A549 (cell line): ENCODE measurements at regions of chr15 and their contacts with region 1.

Region 1: GRCh38 chr15:98904544-98904943 is 103.0 kb downstream of the PGPEP1L start:
- DNase-seq: peak; percentile 85 to 89
- ATAC-seq: peak; percentile 77 to 79
- H3K4me3 ChIP-seq: no peak overlapping the region
- H3K27ac ChIP-seq: peak overlapping the region; percentile 94 to 97
- H3K4me1 ChIP-seq: peaks cover 85% of the 10 kb centered on the region
- CTCF ChIP-seq: peak; percentile 91
- EP300 ChIP-seq: no peak
- POLR2A ChIP-seq: no peak
- RAD21 ChIP-seq: peak; percentile 95 to 98

Region 2: DNA sequence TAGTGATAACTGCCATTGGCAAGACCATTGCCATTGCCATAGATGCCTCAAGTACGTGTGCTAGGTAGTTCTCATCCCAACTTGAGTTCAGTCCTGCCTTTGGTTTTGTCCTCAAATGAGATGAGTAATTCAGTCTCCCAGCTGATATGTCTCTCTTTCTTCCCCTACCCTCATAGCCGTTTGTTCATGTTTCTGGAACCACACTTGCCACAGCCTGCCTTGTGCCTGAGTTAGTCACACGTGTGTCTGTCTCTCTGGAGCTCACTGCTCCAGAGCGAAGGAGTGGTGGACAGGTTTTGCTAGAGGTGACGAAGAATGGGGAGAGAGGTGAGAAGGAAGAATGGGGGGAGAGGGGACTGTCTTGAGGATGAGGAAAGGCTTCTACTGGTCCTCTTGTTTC is 344.2 kb before region 1 on chr15:
- CTCF ChIA-PET with region 1: no interaction called
- POLR2A ChIA-PET with region 1: no interaction called
- DNase-seq: no peak
- ATAC-seq: 0 out of 6 replicates have a peak, but pooled peaks of 1 of the 2 experiments have one; percentile 19
- H3K4me3 ChIP-seq: no peak overlapping the region
- H3K27ac ChIP-seq: no peak overlapping the region
- H3K4me1 ChIP-seq: no peaks in the 10 kb centered on the region
- CTCF ChIP-seq: no peak
- EP300 ChIP-seq: no peak
- POLR2A ChIP-seq: no peak
- RAD21 ChIP-seq: no peak

Region 3: DNA sequence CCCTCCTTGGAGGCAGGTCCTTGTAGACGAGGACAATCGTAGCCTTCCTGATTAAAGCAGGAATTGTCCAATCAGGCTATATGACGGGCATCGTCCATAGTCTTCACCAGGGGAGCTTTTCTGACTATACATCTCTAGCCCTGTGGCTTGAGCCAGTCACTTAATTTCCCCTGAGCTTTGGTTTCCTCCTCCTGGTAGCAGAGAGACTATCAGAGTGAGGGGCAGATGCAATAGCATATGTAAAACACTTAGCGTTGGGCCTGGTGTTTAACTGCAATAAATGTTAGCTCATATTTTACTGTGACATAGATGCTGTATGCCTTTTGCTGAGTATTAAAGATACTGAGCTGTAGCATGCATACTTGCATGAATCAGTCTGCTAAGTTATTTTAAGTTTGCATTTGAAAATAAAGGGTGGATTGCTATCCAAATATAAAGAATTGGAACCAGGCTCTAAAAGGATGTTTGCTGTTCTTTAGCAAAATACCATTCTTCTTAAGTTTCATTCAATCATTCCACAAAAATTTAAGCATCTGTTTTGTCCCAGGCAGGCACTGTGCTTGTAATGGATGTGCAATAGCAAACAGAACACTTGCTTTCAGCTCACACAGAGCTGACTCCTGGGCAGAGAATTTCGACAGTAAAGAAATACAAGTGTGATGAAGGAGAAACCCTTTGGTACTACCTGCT is 48.2 kb before region 1 on chr15:
- CTCF ChIA-PET with region 1: interaction called, 26 read pairs
- POLR2A ChIA-PET with region 1: interaction called, 3 read pairs
- DNase-seq: peak in 1 of 2 experiments; percentile 77
- ATAC-seq: peak in 1 of 2 experiments; percentile 1; a peak in 3 of 6 replicates
- H3K4me3 ChIP-seq: no peak overlapping the region
- H3K27ac ChIP-seq: peak overlapping the region; percentile 95 to 97
- H3K4me1 ChIP-seq: peaks cover 88% of the 10 kb centered on the region
- CTCF ChIP-seq: no peak
- EP300 ChIP-seq: peak; percentile 77 to 92; a peak in 3 of 5 replicates
- POLR2A ChIP-seq: no peak
- RAD21 ChIP-seq: peak; percentile 2 to 30; a peak in 3 of 5 replicates

Region 4: GRCh38 chr15:98881526-98882520 is 22.7 kb before region 1 on chr15:
- CTCF ChIA-PET with region 1: interaction called, 36 read pairs
- POLR2A ChIA-PET with region 1: interaction called, 3 read pairs
- DNase-seq: peak in 1 of 2 experiments; percentile 84
- ATAC-seq: peak; percentile 33 to 51; a peak in 3 of 6 replicates
- H3K4me3 ChIP-seq: no peak overlapping the region
- H3K27ac ChIP-seq: peak overlapping the region; percentile 95 to 97
- H3K4me1 ChIP-seq: peaks cover 96% of the 10 kb centered on the region
- CTCF ChIP-seq: peak; percentile 57
- EP300 ChIP-seq: no peak
- POLR2A ChIP-seq: no peak
- RAD21 ChIP-seq: peak; percentile 69 to 72

Region 5: GRCh38 chr15:98914626-98915025 is 10.1 kb after region 1 on chr15:
- CTCF ChIA-PET with region 1: interaction called, 11 read pairs
- POLR2A ChIA-PET with region 1: no interaction called
- DNase-seq: peak in 1 of 2 experiments; percentile 38
- ATAC-seq: peak in 1 of 2 experiments; percentile 12; a peak in 2 of 6 replicates
- H3K4me3 ChIP-seq: no peak overlapping the region
- H3K27ac ChIP-seq: peak overlapping the region in 1 of 2 experiments; percentile 47; a peak in 2 of 6 replicates
- H3K4me1 ChIP-seq: peaks cover 19% of the 10 kb centered on the region
- CTCF ChIP-seq: no peak
- EP300 ChIP-seq: no peak
- POLR2A ChIP-seq: no peak
- RAD21 ChIP-seq: no peak

Region 6: GRCh38 chr15:99014803-99015676 is 110.5 kb after region 1 on chr15:
- CTCF ChIA-PET with region 1: no interaction called
- POLR2A ChIA-PET with region 1: no interaction called
- DNase-seq: peak; percentile 61 to 77
- ATAC-seq: peak; percentile 92 to 97
- H3K4me3 ChIP-seq: peak overlapping the region; percentile 69
- H3K27ac ChIP-seq: peak overlapping the region; percentile 86 to 96
- H3K4me1 ChIP-seq: peaks cover 30% of the 10 kb centered on the region
- CTCF ChIP-seq: no peak
- EP300 ChIP-seq: no peak
- POLR2A ChIP-seq: no peak
- RAD21 ChIP-seq: peak in 1 of 2 experiments; percentile 22; a peak in 2 of 5 replicates

Region 7: DNA sequence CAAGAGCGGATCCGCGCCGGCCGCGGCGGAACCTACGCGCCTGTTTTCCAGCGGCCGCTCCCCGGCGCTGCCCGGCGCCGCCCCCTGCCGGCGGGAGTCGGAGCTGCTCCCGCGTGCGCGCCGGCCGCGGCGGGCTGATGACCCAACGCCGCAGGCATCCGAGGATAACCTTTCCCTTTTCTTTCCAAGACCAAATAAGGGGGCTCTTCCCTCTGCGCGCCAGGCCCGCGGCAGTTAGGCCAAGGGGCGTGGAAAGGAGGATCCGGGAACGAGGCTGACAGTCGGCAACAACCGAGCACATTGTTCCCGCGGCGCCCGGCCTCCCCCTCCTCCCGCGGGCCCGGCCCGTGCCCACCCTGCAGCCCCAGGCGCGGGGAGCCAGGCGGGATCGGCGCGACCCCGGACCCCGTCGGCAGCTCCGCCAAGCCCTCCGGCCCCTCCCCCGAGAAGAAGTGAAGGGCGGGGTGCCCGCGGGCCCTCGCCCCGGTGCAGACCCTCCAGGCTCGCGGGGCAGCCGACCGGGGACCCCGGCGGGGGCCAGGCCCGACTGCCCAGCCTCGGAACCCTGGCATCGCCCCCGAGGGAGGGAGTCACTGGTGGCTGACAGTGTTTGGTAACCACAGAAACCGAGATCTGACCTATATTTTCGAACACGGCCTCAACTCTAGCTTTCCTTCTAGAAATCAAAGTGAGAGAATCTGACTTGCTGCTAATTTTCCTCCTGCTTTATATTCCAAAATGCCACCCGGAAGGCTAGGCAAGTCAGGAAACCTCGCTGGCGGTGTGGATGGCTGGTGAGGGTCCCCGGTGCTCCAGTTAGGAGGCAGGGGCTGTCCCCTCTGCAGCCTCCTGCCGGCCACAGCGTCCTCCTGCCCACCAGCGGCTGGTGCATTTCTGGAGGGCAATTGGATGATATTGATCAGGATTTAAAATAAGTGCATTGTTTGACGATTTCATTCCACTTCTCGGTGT is 154.8 kb after region 1 on chr15:
- CTCF ChIA-PET with region 1: interaction called, 14 read pairs
- POLR2A ChIA-PET with region 1: no interaction called
- DNase-seq: peak; percentile 78 to 84
- ATAC-seq: peak; percentile 80 to 86
- H3K4me3 ChIP-seq: peak overlapping the region; percentile 51
- H3K27ac ChIP-seq: peak overlapping the region; percentile 87 to 95
- H3K4me1 ChIP-seq: peaks cover 14% of the 10 kb centered on the region; the same call in 2 of the 3 replicates
- CTCF ChIP-seq: peak; percentile 85
- EP300 ChIP-seq: peak in 1 of 2 experiments; percentile 47; a peak in 1 of 5 replicates
- POLR2A ChIP-seq: peak; percentile 30
- RAD21 ChIP-seq: peak; percentile 72 to 95